ENCODE measurements at regions of chr6 and their contacts with region 1.

Region 1: DNA sequence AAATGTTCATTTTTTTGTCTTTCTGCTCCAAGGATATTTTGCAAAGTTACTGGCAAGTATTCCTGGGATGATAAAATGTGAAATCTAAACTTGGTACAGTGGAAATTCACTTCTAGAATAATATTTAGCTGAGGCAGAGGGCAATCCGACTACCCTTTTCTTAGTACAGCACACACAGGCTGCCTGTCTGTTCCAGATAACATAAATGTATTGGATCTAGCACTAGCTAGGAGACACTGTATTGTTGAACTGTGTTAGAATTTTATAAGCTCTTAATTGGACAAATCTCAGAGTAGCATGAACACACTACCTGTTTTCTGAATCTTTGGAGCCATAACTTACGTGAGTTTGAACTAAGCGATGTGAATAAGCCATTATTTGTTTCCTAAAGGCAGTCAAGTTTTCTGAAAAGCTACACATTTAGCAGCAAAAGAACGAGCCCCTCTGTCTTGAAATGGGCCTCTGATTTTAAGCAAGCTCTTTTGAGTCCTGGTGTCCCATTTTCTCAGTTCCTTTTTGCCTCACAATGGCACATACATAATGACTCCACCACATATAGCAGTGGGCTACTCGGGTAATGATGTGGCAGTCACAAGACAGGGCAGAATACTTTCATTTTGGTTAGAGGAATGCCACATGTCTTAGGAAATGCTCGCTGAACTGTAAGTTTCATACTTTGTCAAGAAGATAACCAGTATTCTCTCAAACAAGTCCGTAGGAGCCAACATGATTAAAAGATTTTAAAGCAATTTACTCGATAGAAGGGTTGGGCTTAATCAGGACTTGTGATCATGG is 116.5 kb upstream of the ESR1 start:
- DNase-seq: peak; percentile 65
- H3K4me3 Mint-ChIP-seq: peak overlapping the region; percentile 67
- H3K27ac Mint-ChIP-seq: peak overlapping the region; percentile 87
- H3K4me1 Mint-ChIP-seq: peaks cover 19% of the 10 kb centered on the region
- H3K27me3 Mint-ChIP-seq: no peaks in the 10 kb centered on the region

Region 2: GRCh38 chr6:151544453-151544852 is 146.5 kb before region 1 on chr6:
- CTCF ChIA-PET with region 1: no interaction called
- intact Hi-C with region 1: no loop called
- DNase-seq: no peak
- H3K4me3 Mint-ChIP-seq: no peak overlapping the region
- H3K27ac Mint-ChIP-seq: no peak overlapping the region
- H3K4me1 Mint-ChIP-seq: no peaks in the 10 kb centered on the region
- H3K27me3 Mint-ChIP-seq: peaks cover 13% of the 10 kb centered on the region

Region 3: GRCh38 chr6:151702851-151703611 is 12.1 kb after region 1 on chr6:
- CTCF ChIA-PET with region 1: interaction called, 18 read pairs
- intact Hi-C with region 1: loop called (anchors 1 kb)
- DNase-seq: no peak
- H3K4me3 Mint-ChIP-seq: no peak overlapping the region
- H3K27ac Mint-ChIP-seq: peak overlapping the region; percentile 12
- H3K4me1 Mint-ChIP-seq: peaks cover 45% of the 10 kb centered on the region
- H3K27me3 Mint-ChIP-seq: peaks cover 11% of the 10 kb centered on the region

Region 4: DNA sequence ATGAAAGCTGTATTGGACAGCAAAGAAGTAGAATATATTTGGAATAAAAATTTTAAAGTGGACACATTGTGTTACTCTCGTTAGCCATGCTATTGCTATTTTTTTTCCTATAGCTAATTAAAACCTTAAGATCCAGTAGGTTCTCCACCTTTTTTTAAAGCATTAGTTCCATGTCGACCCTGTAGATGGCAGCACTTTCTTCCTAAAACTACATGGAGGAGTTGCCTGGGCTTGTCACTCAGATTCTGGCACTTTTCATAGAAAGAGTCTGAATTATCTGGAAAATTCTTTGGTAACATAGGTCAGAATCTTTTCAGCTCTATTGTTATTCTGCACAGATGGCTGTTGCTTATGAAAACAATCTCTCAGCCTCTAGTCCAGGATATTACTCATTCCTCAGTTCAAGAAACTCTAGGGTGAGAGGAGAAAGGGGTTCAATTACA is 74.5 kb after region 1 on chr6:
- CTCF ChIA-PET with region 1: interaction called, 18 read pairs
- intact Hi-C with region 1: loop called (anchors 1 kb)
- DNase-seq: peak; percentile 73
- H3K4me3 Mint-ChIP-seq: no peak overlapping the region
- H3K27ac Mint-ChIP-seq: no peak overlapping the region
- H3K4me1 Mint-ChIP-seq: peaks cover 11% of the 10 kb centered on the region
- H3K27me3 Mint-ChIP-seq: peaks cover 4% of the 10 kb centered on the region

Region 5: DNA sequence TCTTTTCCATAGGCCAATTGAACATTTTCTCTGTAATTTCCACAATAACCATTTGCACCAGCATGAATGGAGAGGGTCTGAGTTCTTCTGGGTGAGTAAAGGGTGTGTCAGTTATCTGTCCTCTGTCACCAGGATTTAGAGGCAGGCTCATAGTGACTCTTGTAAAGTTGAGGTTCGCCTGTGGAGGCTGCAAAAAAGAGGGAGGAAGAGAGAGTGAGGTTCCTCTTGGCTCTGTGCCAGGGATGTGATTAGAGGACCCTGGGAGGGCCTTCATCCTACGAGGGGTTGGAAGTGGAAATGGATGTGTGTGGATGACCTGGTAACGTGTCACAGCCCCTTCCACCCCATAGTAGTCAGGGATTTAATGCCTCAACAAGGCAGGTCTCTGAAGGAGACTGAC is 358.5 kb after region 1 on chr6:
- CTCF ChIA-PET with region 1: no interaction called
- intact Hi-C with region 1: no loop called
- DNase-seq: no peak
- H3K4me3 Mint-ChIP-seq: no peak overlapping the region
- H3K27ac Mint-ChIP-seq: no peak overlapping the region
- H3K4me1 Mint-ChIP-seq: no peaks in the 10 kb centered on the region
- H3K27me3 Mint-ChIP-seq: no peaks in the 10 kb centered on the region

Region 6: DNA sequence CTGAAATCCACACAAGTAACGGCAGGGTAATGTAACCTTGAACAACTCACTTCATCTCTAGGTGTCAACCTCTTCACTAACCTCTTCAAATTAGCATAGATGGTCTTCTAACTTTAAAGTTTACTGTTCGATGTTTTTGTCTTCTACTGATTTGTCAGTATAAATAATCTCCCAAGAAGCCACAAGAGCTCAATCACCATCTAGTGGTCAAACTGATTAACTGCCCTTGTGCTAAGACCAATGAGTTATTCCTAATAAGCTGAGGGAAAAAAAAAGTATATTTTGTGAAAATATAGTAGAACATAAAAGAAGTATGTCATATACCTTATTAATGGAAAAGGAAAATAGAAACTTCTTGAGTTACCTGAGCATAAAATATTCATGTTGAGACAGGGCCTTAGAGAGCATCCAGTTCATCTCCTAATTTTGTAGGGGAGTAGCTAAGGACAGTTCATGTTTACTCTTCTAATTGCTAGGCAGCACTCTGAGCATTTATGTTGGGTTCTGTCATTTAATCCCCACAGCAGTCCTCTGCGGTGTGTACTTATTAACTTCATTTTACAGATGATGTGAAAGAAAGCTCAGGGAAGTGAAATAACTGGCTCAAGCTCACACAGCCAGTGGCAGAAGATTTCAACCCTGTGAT is 433.6 kb after region 1 on chr6:
- CTCF ChIA-PET with region 1: interaction called, 18 read pairs
- intact Hi-C with region 1: loop called (anchors 1 kb)
- DNase-seq: no peak
- H3K4me3 Mint-ChIP-seq: no peak overlapping the region
- H3K27ac Mint-ChIP-seq: peak overlapping the region; percentile 39
- H3K4me1 Mint-ChIP-seq: no peaks in the 10 kb centered on the region
- H3K27me3 Mint-ChIP-seq: no peaks in the 10 kb centered on the region

Region 7: DNA sequence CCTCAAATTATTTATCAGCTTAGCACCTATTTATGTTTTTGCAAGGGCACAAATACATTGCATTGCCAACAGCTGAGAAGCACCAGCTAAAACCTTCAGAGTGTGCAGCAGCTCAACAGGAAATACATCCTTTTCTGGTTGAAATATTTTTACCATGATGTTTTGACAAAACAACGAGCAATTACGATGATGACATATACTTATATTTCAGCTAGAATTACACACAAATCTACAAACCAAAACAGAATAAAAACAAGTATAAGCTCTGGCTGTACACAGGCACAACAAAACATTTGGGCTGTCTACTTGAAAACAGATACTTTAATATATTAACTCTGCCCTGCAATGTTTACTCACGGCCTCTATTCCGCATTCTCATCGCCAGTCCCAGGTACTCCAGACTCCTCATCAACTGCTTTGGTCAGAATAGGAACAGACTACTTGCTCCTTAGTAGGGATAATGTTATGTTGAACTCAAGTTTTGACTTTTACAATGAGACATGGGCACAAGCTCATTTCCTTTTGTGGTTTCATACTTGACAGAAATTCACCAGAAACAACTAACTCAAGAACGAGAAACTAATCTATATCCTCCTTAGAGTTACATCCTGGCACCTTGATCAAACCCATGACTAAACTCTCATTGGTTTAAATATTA is 494.1 kb after region 1 on chr6:
- CTCF ChIA-PET with region 1: no interaction called
- intact Hi-C with region 1: loop called (anchors 1 kb)
- DNase-seq: peak; percentile 24
- H3K4me3 Mint-ChIP-seq: peak overlapping the region; percentile 79
- H3K27ac Mint-ChIP-seq: peak overlapping the region; percentile 94
- H3K4me1 Mint-ChIP-seq: peaks cover 69% of the 10 kb centered on the region
- H3K27me3 Mint-ChIP-seq: no peaks in the 10 kb centered on the region

Region 8: DNA sequence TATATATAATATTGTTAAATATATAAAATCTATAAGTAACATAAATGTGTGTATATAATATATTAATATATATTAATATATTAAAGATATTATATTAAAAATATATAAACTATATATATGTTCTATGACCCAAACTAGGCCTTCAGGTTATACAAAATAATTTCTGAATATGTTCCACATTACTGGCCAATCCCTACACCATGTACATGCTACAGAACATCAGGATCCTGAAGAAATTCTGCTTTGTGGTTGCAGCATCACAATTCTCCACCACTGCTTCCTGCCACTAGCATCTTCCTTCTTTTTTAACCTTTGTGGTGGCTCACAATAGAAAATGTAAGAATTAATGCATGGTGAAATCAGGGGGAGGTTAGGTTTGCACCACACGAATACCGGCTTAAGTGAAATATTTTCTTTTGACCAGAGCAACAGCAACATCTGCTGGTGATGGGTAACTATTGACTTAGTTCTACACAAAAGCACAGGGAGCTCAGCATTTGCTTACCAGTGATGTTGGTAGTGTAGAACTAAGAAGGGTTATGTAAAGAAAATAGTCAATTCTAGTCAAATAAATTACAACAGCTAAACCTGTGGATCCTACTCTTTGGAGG is 665.6 kb after region 1 on chr6:
- CTCF ChIA-PET with region 1: no interaction called
- intact Hi-C with region 1: loop called (anchors 1 kb)
- DNase-seq: peak; percentile 16
- H3K4me3 Mint-ChIP-seq: no peak overlapping the region
- H3K27ac Mint-ChIP-seq: no peak overlapping the region
- H3K4me1 Mint-ChIP-seq: peaks cover 2% of the 10 kb centered on the region
- H3K27me3 Mint-ChIP-seq: no peaks in the 10 kb centered on the region